ENCODE measurements at regions of chr5 and their contacts with region 1.

Region 1: GRCh38 chr5:107571621-107572536 is 98.9 kb downstream of the EFNA5 start:
- DNase-seq: peak; percentile 90
- H3K4me3 Mint-ChIP-seq: peak overlapping the region; percentile 64
- H3K27ac Mint-ChIP-seq: no peak overlapping the region
- H3K4me1 Mint-ChIP-seq: peaks cover 18% of the 10 kb centered on the region
- H3K27me3 Mint-ChIP-seq: peaks cover 21% of the 10 kb centered on the region

Region 2: GRCh38 chr5:107538805-107539445 is 33.0 kb before region 1 on chr5:
- CTCF ChIA-PET with region 1: interaction called, 10 read pairs
- DNase-seq: no peak
- H3K4me3 Mint-ChIP-seq: no peak overlapping the region
- H3K27ac Mint-ChIP-seq: no peak overlapping the region
- H3K4me1 Mint-ChIP-seq: peaks cover 10% of the 10 kb centered on the region
- H3K27me3 Mint-ChIP-seq: peaks cover 4% of the 10 kb centered on the region

Region 3: DNA sequence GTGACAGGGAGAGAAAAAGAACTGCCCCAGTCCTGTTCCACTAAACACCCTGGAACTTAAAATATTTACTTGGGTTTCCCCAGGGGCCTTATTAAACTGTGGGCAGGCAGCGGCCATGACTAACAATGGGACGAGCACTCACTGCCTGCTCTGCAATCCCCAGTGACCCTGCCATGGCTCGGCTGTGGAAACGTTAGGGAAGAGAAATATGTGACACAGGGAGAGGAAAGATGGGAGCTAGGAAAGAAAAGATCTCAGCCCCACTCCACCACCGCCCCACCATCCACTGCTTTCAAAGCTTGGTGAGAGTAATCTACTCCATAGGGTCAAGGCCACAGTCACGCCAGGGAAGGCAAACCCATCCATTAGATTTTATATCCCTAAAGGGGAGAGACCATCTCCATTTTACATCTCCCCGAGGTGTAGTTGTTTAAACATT is 18.7 kb before region 1 on chr5:
- CTCF ChIA-PET with region 1: interaction called, 11 read pairs
- DNase-seq: no peak
- H3K4me3 Mint-ChIP-seq: no peak overlapping the region
- H3K27ac Mint-ChIP-seq: no peak overlapping the region
- H3K4me1 Mint-ChIP-seq: no peaks in the 10 kb centered on the region
- H3K27me3 Mint-ChIP-seq: peaks cover 5% of the 10 kb centered on the region

Region 4: GRCh38 chr5:107560377-107560776 is 11.5 kb before region 1 on chr5:
- CTCF ChIA-PET with region 1: interaction called, 11 read pairs
- DNase-seq: no peak
- H3K4me3 Mint-ChIP-seq: no peak overlapping the region
- H3K27ac Mint-ChIP-seq: no peak overlapping the region
- H3K4me1 Mint-ChIP-seq: no peaks in the 10 kb centered on the region
- H3K27me3 Mint-ChIP-seq: peaks cover 5% of the 10 kb centered on the region